B cell (primary cell): ENCODE measurements at regions of chr4 and their contacts with region 1.

Region 1: GRCh38 chr4:39933671-39934590 is 43.8 kb downstream of the PDS5A start:
- DNase-seq: no peak
- ATAC-seq: no peak
- H3K4me3 ChIP-seq: no peak overlapping the region
- H3K4me3 Mint-ChIP-seq: peak overlapping the region; percentile 17
- H3K27ac ChIP-seq: peak overlapping the region in 1 of 2 donors; percentile 58
- H3K27ac Mint-ChIP-seq: peak overlapping the region; percentile 58
- H3K4me1 ChIP-seq: peaks cover 26 to 40% of the 10 kb centered on the region in 2 donors
- H3K4me1 Mint-ChIP-seq: peaks cover 57% of the 10 kb centered on the region
- H3K27me3 ChIP-seq: no peaks in the 10 kb centered on the region
- H3K27me3 Mint-ChIP-seq: no peaks in the 10 kb centered on the region
- CTCF ChIP-seq: no peak

Region 2: DNA sequence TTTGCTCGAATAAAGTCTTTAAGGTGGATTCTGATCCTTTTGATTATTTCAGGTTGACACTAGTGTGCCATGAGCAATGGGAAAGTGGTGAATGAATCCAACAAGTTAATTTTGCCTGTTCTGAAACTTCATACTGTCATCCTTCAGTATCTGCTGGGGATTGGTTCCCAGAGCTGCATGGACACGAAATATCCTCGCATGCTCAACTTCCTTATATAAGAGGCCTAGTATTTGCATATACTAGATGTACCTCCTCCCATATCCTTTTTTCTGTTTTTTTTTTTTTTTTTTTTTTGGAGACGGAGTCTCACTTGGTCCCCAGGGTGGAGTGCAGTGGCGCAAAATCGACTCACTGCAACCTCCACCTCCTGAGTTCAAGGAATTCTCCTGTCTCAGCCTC is 66.8 kb after region 1 on chr4:
- CTCF ChIA-PET with region 1: no interaction called
- POLR2A ChIA-PET with region 1: interaction called, 10 read pairs
- intact Hi-C with region 1: no loop called
- DNase-seq: no peak
- ATAC-seq: no peak
- H3K4me3 ChIP-seq: no peak overlapping the region
- H3K4me3 Mint-ChIP-seq: no peak overlapping the region
- H3K27ac ChIP-seq: no peak overlapping the region
- H3K27ac Mint-ChIP-seq: no peak overlapping the region
- H3K4me1 ChIP-seq: peaks cover 0 to 4% of the 10 kb centered on the region in 2 donors
- H3K4me1 Mint-ChIP-seq: peaks cover 4% of the 10 kb centered on the region
- H3K27me3 ChIP-seq: no peaks in the 10 kb centered on the region
- H3K27me3 Mint-ChIP-seq: no peaks in the 10 kb centered on the region
- CTCF ChIP-seq: no peak

Region 3: DNA sequence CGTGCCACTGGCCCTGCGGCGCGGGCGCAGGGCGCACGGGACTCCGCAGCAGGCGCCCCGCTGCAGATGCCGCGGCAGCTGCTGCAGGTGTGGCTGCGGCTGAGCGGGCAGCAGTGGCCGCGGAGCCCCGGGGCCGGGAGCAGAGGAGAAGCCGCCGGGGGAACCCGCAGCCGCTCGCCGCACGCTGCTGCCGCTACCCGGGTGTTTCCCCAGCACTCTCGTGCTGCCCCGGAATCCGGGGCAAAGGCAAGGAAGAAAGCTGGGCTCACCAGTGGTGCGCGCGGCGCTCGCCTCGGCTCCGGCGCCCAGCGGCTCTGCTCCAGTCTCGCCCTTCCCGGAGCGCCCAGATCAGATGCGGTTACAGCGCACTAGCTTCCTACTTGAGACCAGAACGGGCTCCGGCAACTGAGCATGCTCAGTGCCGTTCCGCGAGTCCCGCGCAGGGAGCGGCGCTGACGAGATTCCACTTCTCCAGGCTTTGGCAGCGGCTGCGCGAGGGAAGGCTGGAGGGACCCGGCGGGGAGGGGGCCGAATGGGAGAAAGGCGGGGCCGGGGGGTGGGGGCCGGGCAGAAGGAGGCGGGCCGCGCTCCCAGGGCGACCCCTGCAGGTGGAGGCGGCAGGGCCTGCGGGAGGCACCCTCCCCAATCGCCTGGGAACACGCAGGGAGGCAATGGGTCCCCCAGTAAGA is 1280.3 kb after region 1 on chr4 and contains the start of gene APBB2:
- CTCF ChIA-PET with region 1: no interaction called
- POLR2A ChIA-PET with region 1: no interaction called
- intact Hi-C with region 1: no loop called
- DNase-seq: peak; percentile 58
- ATAC-seq: peak; percentile 72
- H3K4me3 ChIP-seq: peak within 1 kb of the TSS in 4 of 5 experiments; percentile 26 to 58 (median 50)
- H3K4me3 Mint-ChIP-seq: peak within 1 kb of the TSS; percentile 82
- H3K27ac ChIP-seq: no peak within 1 kb of the TSS
- H3K27ac Mint-ChIP-seq: peak within 1 kb of the TSS; percentile 32
- H3K4me1 ChIP-seq: peaks cover 21 to 22% of the 10 kb centered on the region in 2 donors
- H3K4me1 Mint-ChIP-seq: peaks cover 30% of the 10 kb centered on the region
- H3K27me3 ChIP-seq: peaks cover 0 to 47% (median 31%) of the 10 kb centered on the region in 4 experiments
- H3K27me3 Mint-ChIP-seq: peaks cover 65% of the 10 kb centered on the region
- CTCF ChIP-seq: peak; percentile 23
- total RNA-seq, gene APBB2: 12.6 and 15.8 TPM in 2 replicates